GM10248 (cell line): ENCODE measurements at regions of chr1 and their contacts with region 1.

Region 1: DNA sequence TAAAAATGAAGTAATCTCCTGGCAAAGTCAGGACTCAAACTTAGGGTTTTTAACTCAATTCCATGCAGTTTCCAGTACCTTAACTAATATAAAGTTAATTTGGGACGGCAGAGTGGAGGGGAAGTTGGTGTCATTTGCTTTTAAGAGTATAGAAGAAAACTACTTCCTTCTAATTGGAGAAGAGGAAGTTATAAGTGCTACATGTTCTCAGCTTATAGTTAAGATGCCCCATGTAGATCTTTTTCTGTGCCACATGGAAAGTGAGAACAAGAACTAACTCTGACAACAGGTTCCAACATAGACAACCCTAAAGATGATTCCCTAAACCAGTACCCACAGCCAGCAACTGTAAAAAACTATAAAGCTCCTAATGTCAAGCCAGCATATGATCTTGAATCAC is 11.5 kb downstream of the RRAGC start:
- DNase-seq: no peak
- CTCF ChIP-seq: no peak

Region 2: DNA sequence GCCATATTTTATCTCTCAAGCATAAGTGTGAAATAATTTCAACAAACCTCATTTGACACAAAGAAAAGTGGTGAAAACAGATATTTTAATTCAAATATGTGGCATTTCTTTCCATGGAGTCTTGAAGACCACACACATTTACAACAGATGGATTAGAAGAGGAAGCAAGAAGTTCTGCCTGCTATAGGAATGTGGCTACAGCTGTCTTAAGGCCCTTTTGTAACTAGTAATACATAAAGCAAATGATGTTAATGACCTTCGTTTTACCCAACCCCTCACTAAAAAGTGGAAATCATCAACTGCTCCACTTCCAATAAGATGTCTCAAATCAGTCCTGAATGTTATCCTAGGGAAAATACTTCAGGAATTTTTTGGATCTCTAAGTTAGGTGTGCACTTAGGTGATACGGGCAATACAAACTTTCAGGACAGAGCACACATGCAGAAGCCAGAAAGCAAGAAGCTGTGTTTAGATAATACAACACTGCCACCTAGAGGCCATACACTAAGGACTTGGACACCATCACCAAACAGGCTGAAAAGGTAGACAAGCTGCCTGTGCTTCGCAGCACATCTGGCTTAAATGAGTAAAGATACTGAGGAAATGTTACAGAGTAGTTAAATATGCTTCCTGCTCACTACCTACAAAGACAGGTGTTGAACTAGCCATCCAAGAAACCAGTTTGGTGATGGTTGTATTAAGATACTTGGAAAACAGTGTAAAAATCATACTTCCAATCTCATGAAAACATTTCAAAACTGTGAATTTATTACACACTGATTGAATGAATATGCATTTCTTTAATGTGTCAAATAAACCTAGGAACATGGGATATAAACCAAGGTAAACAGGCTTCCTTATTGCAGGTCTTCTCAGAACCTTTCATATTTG is 12.9 kb before region 1 on chr1:
- CTCF ChIA-PET with region 1: interaction called, 12 read pairs
- POLR2A ChIA-PET with region 1: no interaction called
- DNase-seq: peak; percentile 67
- CTCF ChIP-seq: peak; percentile 78